Activated T-helper 1 cell treated with anti-CD3 and anti-CD28 coated beads, Interleukin-12 subunit alpha, Interleukin-12 subunit beta, Interleukin-2, Interleukin-4 antibody, amounts not matched to agents 30 ng/mL and 10 ng/mL and 1 ng/mL, durations not matched to agents 14 hours and 24 hours and 36 hours (primary cell): ENCODE measurements at regions of chr1 and their contacts with region 1.

Region 1: GRCh38 chr1:110668549-110668948 is 6.2 kb downstream of the KCNA3 start:
- DNase-seq: no peak
- H3K4me3 Mint-ChIP-seq: peak overlapping the region; percentile 77
- H3K27ac Mint-ChIP-seq: peak overlapping the region; percentile 89
- H3K4me1 Mint-ChIP-seq: peaks cover 34% of the 10 kb centered on the region
- H3K27me3 Mint-ChIP-seq: no peaks in the 10 kb centered on the region

Region 2: GRCh38 chr1:109532365-109533136 is 1136.0 kb before region 1 on chr1:
- intact Hi-C with region 1: no loop called
- DNase-seq: peak; percentile 85
- H3K4me3 Mint-ChIP-seq: peak overlapping the region; percentile 53
- H3K27ac Mint-ChIP-seq: peak overlapping the region; percentile 86
- H3K4me1 Mint-ChIP-seq: peaks cover 24% of the 10 kb centered on the region
- H3K27me3 Mint-ChIP-seq: no peaks in the 10 kb centered on the region

Region 3: DNA sequence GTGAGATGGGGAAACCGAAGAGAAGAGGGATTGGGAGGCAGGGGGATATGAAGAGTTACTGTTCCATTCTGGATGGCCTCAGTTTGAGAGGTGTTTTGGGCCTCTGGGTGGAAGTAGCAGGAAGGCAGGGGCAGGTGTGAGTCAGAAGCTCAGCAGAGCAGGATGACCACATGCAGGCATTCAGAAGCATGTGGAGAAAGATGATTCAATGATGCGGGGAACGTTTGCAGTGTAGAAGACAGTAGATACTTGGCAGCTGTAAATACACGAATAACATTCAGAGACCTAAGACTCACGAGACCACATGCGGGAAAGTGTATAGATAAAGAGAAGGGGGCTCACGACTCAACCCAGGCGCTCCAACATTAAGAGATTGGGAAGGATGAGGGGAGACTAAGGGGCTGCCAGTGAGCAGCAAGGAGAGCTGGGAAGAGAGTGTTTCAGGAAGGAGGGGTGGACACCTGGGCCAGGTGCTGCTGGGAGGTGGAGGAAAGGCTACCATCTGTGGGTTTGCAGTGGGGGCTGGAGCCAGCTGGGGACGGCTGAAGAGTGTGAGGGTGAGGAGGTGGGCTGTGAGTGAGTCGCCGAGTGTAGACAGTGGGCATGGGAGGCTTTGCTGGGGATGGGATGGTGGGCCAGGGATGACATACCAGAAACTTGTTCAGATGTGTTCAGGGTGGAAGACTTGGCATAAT is 899.1 kb before region 1 on chr1:
- intact Hi-C with region 1: no loop called
- DNase-seq: no peak
- H3K4me3 Mint-ChIP-seq: no peak overlapping the region
- H3K27ac Mint-ChIP-seq: no peak overlapping the region
- H3K4me1 Mint-ChIP-seq: peaks cover 12% of the 10 kb centered on the region
- H3K27me3 Mint-ChIP-seq: peaks cover 5% of the 10 kb centered on the region

Region 4: GRCh38 chr1:110407260-110408210 is 261.0 kb before region 1 on chr1 and contains the start of gene LAMTOR5:
- intact Hi-C with region 1: loop called (anchors 5 kb)
- DNase-seq: peak; percentile 90
- H3K4me3 Mint-ChIP-seq: peak within 1 kb of the TSS; percentile 100
- H3K27ac Mint-ChIP-seq: peak within 1 kb of the TSS; percentile 100
- H3K4me1 Mint-ChIP-seq: peaks cover 22% of the 10 kb centered on the region
- H3K27me3 Mint-ChIP-seq: no peaks in the 10 kb centered on the region
- total RNA-seq, gene LAMTOR5: 163 and 184 TPM in 2 replicates

Region 5: DNA sequence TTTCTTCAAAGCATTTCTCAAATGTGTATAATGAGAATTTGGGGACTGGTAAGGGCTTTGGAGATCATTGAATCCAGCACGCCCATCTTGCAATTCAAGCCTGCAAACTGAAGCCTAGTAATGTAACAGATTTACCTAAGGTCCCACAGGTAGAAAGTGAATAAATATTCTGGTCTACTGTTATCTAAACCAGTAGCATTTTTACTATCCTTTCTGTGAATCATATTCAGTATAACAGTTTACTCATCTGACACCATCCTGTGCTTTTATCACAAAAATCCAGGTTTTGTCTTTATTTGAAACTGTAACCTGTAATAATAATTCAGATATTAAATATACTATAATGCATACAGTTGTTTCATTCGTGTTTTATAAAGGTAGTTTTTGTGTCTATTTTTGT is 11.2 kb before region 1 on chr1:
- intact Hi-C with region 1: loop called (anchors 1 kb)
- DNase-seq: no peak
- H3K4me3 Mint-ChIP-seq: no peak overlapping the region
- H3K27ac Mint-ChIP-seq: no peak overlapping the region
- H3K4me1 Mint-ChIP-seq: peaks cover 58% of the 10 kb centered on the region
- H3K27me3 Mint-ChIP-seq: no peaks in the 10 kb centered on the region